ENCODE measurements at regions of chr1 and their contacts with region 1.

Region 1: DNA sequence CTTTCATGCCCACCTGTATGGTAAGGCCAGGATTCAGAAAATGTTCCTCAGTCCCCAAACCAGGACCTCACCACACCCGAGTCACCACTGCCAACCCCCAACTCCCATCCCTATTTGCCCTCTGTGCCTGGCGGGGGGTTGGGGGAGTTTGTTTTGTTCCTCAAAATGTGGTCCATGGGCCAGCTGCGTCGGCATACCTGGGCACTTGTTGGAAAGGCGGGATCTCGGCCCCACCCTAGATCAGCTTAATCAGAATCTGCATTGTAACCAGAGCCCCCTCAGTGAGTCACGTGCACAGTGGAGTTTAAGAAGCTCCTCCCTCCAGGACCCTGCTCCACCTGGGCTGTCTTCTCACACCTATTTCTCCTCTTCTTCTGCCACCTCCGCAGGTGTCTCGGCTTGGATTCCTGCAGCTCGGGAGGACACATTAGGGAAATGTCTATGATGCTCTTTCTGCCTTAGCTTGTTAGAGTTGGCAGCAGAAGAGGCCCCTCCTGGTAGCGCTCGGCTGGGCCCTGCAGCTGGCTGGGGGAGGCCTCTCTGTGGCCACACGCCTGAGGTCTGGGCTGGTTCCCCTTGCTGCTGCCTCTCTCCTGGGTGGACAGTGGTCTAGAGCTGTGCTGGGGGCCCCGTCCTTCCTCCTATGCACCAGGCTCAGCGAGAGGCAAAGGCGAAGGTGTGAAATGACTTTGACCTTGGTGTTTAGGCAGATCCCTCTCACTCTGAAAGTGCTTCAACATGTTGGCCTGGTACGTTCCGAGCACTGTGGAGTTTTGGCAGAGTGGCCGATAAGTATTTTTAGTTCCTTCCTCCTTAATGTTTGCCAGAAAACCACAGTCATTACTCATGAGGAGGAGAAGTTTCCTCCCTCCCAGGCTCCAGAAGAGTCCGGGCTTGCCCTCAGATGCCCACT is 41.8 kb upstream of the CAMTA1 start:
- DNase-seq: peak; percentile 91
- H3K4me3 Mint-ChIP-seq: peak overlapping the region; percentile 52
- H3K27ac Mint-ChIP-seq: peak overlapping the region; percentile 55
- H3K4me1 Mint-ChIP-seq: peaks cover 12% of the 10 kb centered on the region
- H3K27me3 Mint-ChIP-seq: peaks cover 11% of the 10 kb centered on the region
- CTCF ChIP-seq: no peak

Region 2: GRCh38 chr1:6554907-6555778 is 188.3 kb before region 1 on chr1 and contains the start of gene TAS1R1:
- CTCF ChIA-PET with region 1: no interaction called
- POLR2A ChIA-PET with region 1: no interaction called
- intact Hi-C with region 1: no loop called
- DNase-seq: no peak
- H3K4me3 Mint-ChIP-seq: peak within 1 kb of the TSS; percentile 74
- H3K27ac Mint-ChIP-seq: peak within 1 kb of the TSS; percentile 16
- H3K4me1 Mint-ChIP-seq: peaks cover 9% of the 10 kb centered on the region
- H3K27me3 Mint-ChIP-seq: no peaks in the 10 kb centered on the region
- CTCF ChIP-seq: no peak
- total RNA-seq, gene TAS1R1: not detected in 2 replicates

Region 3: GRCh38 chr1:6753320-6754140 is 10.1 kb after region 1 on chr1:
- CTCF ChIA-PET with region 1: interaction called, 6 read pairs
- POLR2A ChIA-PET with region 1: interaction called, 11 read pairs
- intact Hi-C with region 1: no loop called
- DNase-seq: peak; percentile 43
- H3K4me3 Mint-ChIP-seq: peak overlapping the region; percentile 44
- H3K27ac Mint-ChIP-seq: peak overlapping the region; percentile 14
- H3K4me1 Mint-ChIP-seq: peaks cover 14% of the 10 kb centered on the region
- H3K27me3 Mint-ChIP-seq: peaks cover 13% of the 10 kb centered on the region
- CTCF ChIP-seq: no peak

Region 4: DNA sequence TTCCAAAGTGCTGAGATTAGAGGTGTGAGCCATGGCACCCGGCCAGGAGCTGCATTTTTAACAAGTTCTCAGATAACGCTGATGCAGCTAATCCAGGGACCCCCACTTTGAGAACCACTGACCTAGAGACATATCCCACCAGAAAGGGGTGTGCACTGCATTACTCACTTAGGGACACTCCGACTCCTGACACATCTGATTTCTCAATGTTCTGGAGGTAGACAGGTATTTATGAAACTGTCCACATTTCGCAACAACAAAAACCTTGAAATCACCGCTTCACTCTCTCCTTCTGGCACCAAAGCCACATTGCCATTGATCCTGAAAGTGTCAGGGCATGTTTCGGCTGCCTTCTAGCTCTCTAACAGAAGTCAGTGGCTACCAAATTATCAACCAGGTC is 18.6 kb after region 1 on chr1:
- CTCF ChIA-PET with region 1: interaction called, 3 read pairs
- POLR2A ChIA-PET with region 1: interaction called, 12 read pairs
- intact Hi-C with region 1: no loop called
- DNase-seq: peak; percentile 91
- H3K4me3 Mint-ChIP-seq: peak overlapping the region; percentile 43
- H3K27ac Mint-ChIP-seq: peak overlapping the region; percentile 72
- H3K4me1 Mint-ChIP-seq: peaks cover 14% of the 10 kb centered on the region
- H3K27me3 Mint-ChIP-seq: no peaks in the 10 kb centered on the region
- CTCF ChIP-seq: no peak

Region 5: DNA sequence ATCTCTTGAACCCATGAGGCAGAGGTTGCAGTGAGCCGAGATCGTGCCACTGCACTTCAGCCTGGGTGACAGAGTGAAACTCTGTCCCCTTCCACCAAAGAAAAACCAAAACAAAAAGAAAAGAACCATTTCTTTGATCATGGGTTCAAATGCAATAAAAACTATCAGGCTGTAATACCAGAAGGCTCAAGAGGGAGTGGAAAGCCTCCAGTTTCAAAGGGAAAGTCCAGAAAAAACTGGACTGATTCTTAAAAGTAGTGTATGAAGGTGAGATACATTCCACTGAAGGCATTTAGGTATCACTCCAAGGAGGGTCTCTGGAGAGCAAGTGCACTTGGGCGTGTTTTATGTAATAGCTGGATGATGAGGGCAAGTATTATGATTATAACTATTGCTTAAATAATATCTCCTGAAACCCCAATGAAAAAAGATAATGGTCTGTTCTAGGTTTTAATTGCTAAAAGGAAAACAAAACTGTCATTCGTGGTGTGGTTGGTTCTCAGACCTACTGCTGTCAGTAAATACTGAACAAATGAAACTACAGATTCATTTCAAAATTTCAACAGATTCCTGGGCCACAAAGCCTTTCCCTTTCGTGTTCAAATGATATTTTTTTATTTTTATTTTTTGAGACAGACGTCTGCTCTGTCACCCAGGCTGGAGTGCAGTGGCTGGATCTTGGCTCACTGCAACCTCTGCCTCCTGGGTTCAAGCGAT is 35.8 kb after region 1 on chr1:
- CTCF ChIA-PET with region 1: no interaction called
- POLR2A ChIA-PET with region 1: interaction called, 32 read pairs
- intact Hi-C with region 1: no loop called
- DNase-seq: no peak
- H3K4me3 Mint-ChIP-seq: no peak overlapping the region
- H3K27ac Mint-ChIP-seq: no peak overlapping the region
- H3K4me1 Mint-ChIP-seq: no peaks in the 10 kb centered on the region
- H3K27me3 Mint-ChIP-seq: no peaks in the 10 kb centered on the region
- CTCF ChIP-seq: no peak

Measured in MCF 10A (cell line).